AG04449 (cell line): ENCODE measurements at regions of chr18 and their contacts with region 1.

Region 1: DNA sequence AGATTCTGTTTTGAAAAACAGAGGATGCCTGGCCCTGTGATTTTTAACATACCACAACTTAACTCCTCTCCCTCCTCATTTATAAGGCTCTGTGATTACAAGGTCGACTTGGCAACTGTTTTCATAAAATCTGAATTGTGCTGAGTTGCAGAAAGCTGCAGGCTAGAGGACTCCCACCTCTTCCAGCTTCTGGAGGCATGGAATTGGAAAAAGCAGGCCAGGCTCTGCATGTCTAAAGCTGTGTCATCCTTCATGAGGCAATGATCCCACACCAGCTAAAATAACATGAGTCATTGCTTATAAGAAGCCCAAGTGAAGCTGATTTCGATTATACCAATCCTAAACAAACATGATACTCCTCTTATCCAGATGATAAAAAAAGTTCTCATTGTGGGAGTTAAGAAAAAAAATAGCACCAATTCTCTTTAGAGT is 11.7 kb downstream of the ARHGAP28 start:
- DNase-seq: peak; percentile 91
- H3K4me3 ChIP-seq: no peak overlapping the region
- CTCF ChIP-seq: no peak

Region 2: GRCh38 chr18:6194127-6194526 is 547.1 kb before region 1 on chr18:
- CTCF ChIA-PET with region 1: no interaction called
- POLR2A ChIA-PET with region 1: no interaction called
- DNase-seq: no peak
- H3K4me3 ChIP-seq: no peak overlapping the region
- CTCF ChIP-seq: no peak

Region 3: GRCh38 chr18:6650127-6650507 is 91.1 kb before region 1 on chr18:
- CTCF ChIA-PET with region 1: no interaction called
- POLR2A ChIA-PET with region 1: no interaction called
- DNase-seq: no peak
- H3K4me3 ChIP-seq: no peak overlapping the region
- CTCF ChIP-seq: no peak

Region 4: GRCh38 chr18:6731222-6731596 is 10.0 kb before region 1 on chr18:
- CTCF ChIA-PET with region 1: interaction called, 3 read pairs
- POLR2A ChIA-PET with region 1: interaction called, 12 read pairs
- DNase-seq: peak; percentile 75
- H3K4me3 ChIP-seq: no peak overlapping the region
- CTCF ChIP-seq: no peak